Activated CD4-positive, alpha-beta T cell treated with anti-CD3 and anti-CD28 coated beads, Interleukin-2, amount 10 ng/mL, durations not matched to agents 7 days and 5 days (primary cell): ENCODE measurements at regions of chr10 and their contacts with region 1.

Region 1: DNA sequence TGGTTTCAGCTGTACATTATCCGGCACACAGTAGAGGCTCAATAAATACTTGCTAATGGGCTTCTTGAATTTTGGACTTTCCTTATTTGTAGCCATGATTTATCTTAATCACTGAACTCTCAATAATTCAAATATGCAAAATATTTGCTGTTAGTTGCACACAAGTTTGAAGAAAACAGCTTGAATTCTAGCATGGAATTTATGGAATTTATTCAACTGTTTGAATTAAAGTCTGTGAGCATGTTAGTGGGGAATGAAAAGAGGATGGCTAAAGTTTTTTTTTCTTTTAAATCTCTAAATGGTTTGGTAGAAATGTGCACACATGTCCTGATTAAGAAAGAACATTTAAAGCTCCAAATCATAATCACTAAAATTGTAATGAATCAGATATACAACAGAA is 42.5 kb downstream of the SIRT1 start:
- DNase-seq: no peak
- H3K4me3 Mint-ChIP-seq: no peak overlapping the region
- H3K27ac Mint-ChIP-seq: no peak overlapping the region
- H3K4me1 Mint-ChIP-seq: no peaks in the 10 kb centered on the region
- H3K27me3 Mint-ChIP-seq: no peaks in the 10 kb centered on the region

Region 2: DNA sequence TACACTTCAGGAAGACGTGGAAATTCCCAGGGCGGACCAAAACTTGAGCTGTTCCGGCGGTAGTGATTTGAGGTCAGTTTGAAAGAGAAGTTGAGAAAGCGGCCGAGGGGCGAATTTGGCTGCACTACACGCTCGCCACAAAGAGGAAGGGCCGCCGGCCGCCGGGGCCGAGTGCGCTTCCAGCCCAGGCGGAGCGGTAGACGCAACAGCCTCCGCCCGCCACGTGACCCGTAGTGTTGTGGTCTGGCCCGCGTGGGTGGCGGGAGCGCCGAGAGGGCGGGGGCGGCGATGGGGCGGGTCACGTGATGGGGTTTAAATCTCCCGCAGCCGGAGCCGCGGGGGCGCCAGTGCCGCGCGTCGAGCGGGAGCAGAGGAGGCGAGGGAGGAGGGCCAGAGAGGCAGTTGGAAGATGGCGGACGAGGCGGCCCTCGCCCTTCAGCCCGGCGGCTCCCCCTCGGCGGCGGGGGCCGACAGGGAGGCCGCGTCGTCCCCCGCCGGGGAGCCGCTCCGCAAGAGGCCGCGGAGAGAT is 42.6 kb before region 1 on chr10 and contains the start of gene SIRT1:
- CTCF ChIA-PET with region 1: no interaction called
- POLR2A ChIA-PET with region 1: interaction called, 13 read pairs
- DNase-seq: peak; percentile 94
- H3K4me3 Mint-ChIP-seq: peak within 1 kb of the TSS; percentile 95
- H3K27ac Mint-ChIP-seq: peak within 1 kb of the TSS; percentile 97
- H3K4me1 Mint-ChIP-seq: peaks cover 37% of the 10 kb centered on the region
- H3K27me3 Mint-ChIP-seq: no peaks in the 10 kb centered on the region
- total RNA-seq, gene SIRT1: 21.9 to 25.8 TPM

Region 3: DNA sequence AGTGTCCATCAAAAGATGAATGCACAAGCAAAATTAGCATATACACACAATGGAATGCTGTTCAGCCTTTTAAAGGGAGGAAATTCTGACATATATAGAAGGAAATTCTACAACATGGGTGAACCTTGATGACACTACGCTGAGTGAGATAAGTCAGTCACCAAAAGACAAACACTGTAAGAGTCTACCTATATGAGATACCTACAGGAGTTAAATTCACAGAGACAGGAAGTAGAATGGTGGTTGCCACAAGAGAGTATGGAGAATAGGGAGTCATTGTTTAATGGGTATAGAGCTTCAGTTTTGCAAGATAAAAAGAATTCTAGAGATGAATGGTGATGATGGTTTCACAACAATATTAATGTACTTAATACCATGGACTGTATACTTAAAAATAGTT is 96.3 kb after region 1 on chr10:
- CTCF ChIA-PET with region 1: no interaction called
- POLR2A ChIA-PET with region 1: no interaction called
- DNase-seq: no peak
- H3K4me3 Mint-ChIP-seq: no peak overlapping the region
- H3K27ac Mint-ChIP-seq: no peak overlapping the region
- H3K4me1 Mint-ChIP-seq: peaks cover 4% of the 10 kb centered on the region
- H3K27me3 Mint-ChIP-seq: no peaks in the 10 kb centered on the region